ENCODE measurements at regions of chrX and their contacts with region 1.

Region 1: GRCh38 chrX:66110112-66110511 is 53.9 kb upstream of the HEPH start:
- DNase-seq: peak; percentile 12 to 23 (median 21)
- H3K4me3 ChIP-seq: no peak overlapping the region
- H3K4me3 Mint-ChIP-seq: no peak overlapping the region
- H3K27ac ChIP-seq: no peak overlapping the region
- H3K27ac Mint-ChIP-seq: no peak overlapping the region
- H3K4me1 ChIP-seq: no peaks in the 10 kb centered on the region
- H3K4me1 Mint-ChIP-seq: peaks cover 0 to 1% (median 0%) of the 10 kb centered on the region in 4 donors
- H3K27me3 ChIP-seq: no peaks in the 10 kb centered on the region
- H3K27me3 Mint-ChIP-seq: peaks cover 0 to 2% of the 10 kb centered on the region in 2 donors

Region 2: DNA sequence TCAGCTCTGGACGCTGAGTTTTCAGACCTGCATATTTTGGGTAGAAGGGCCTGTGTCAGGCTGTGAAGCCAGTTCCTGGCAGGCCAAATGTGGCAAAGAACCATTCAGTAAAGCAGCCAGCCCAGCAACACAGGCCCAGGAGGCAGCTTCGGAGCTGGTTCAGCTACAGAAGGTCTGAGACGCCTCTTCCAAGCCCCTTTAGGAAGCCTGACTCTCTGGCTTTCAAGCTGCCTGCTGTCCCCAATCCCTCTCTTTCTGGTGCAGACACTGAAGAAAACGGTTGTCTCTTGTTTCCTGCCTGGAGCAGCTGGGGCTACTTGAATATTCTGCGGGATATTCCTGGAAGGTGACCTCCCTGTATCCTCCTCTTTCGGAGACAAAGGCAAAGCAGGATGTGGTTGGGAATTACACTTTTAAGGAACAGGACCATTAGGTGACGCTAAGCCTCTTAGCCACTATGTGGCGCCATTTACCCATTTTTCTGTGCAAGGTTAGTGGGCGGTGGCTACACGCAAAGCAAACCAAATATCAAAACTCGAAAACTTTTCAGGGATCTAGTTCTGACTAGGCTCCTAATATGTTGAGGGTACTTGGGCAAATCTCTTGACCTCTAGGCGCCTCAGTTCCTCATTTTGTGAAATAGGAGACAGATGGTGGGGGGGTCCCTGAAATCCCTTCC is 528.3 kb before region 1 on chrX:
- CTCF ChIA-PET with region 1: interaction called, 5 read pairs
- POLR2A ChIA-PET with region 1: no interaction called
- intact Hi-C with region 1: loop called (anchors 1 kb)
- DNase-seq: peak; percentile 57 to 69 (median 66)
- H3K4me3 ChIP-seq: no peak overlapping the region
- H3K4me3 Mint-ChIP-seq: no peak overlapping the region
- H3K27ac ChIP-seq: no peak overlapping the region
- H3K27ac Mint-ChIP-seq: peak overlapping the region in 1 of 7 donors; percentile 30
- H3K4me1 ChIP-seq: no peaks in the 10 kb centered on the region
- H3K4me1 Mint-ChIP-seq: peaks cover 0 to 13% (median 5%) of the 10 kb centered on the region in 4 donors
- H3K27me3 ChIP-seq: no peaks in the 10 kb centered on the region
- H3K27me3 Mint-ChIP-seq: no peaks in the 10 kb centered on the region

Region 3: DNA sequence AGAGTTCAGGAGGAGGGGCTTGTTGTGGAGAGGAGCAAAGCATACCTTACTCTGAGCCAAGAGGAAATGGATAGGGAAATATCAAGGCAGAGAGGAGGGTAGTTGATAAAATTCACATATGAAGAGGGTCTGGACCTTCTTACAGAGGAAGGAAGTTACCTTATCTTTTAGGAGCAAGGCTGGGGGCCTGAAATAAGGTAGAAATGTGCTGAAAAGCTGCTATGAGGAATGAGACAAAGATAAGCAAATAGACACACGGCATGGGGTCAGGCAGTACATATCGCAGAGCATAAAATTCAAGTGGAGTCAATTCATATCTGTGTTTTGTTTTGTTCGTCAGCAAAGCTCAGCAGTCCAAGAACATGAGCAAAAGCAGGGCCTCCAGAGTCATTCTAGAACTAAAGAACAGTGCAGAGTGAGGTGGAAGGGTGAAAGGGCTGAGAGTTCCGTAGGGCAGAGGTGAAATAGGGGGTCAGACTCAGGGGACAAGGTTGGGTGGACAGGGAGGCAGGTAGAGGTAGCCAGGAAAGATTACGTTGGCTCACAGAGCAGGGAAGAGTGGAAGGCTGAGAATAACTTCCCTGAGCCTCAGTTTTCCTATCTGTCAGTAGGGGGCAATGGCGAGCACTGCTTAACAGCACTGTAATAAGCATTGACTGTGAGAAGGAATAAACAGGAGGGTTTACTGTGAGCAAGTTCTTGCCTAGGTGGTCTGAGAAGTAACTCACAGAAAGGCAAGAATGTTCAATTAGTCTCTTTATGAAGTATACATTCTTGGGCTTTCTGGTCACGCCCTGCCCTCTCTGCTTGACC is 79.4 kb before region 1 on chrX:
- CTCF ChIA-PET with region 1: interaction called, 5 read pairs
- POLR2A ChIA-PET with region 1: no interaction called
- intact Hi-C with region 1: loop called (anchors 1 kb)
- DNase-seq: peak in 3 of 5 donors; percentile 11 to 36 (median 30)
- H3K4me3 ChIP-seq: no peak overlapping the region
- H3K4me3 Mint-ChIP-seq: no peak overlapping the region
- H3K27ac ChIP-seq: no peak overlapping the region
- H3K27ac Mint-ChIP-seq: no peak overlapping the region
- H3K4me1 ChIP-seq: peaks cover 8% of the 10 kb centered on the region
- H3K4me1 Mint-ChIP-seq: no peaks in the 10 kb centered on the region
- H3K27me3 ChIP-seq: no peaks in the 10 kb centered on the region
- H3K27me3 Mint-ChIP-seq: no peaks in the 10 kb centered on the region